ENCODE measurements at regions of chr5 and their contacts with region 1.

Region 1: DNA sequence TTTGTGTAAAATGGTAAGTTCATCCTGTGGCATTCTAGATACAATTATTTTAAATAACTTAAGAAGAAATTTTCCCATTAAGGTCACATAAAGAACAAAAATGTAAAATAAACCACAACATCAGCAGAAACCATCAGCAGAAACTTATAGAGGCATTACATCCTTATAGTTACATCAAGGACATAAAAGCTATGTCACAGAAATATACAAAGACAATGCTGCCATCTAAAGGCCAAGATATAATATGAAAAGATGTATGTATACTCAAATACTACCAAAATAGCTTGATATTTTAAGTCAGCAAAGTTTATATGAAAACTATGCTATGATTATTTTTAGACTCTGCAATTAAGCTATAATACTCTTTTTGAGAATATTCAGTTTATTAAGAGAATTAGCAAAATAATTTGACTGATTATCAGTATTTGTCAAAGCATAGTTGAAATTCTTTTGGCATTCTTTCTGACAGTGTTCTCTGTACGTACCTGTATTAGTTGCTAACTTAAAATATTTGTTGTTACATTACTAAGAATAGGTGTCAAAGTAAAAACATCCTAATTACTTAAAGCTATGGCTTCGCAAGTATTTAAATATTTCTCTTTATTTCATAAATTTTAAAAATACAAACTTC is 36.2 kb downstream of the FBXL17 start:
- DNase-seq: peak; percentile 70
- H3K4me3 ChIP-seq: no peak overlapping the region
- H3K27ac ChIP-seq: no peak overlapping the region
- H3K4me1 ChIP-seq: no peaks in the 10 kb centered on the region
- H3K27me3 ChIP-seq: no peaks in the 10 kb centered on the region
- CTCF ChIP-seq: peak; percentile 2 to 10
- POLR2A ChIP-seq: no peak

Region 2: DNA sequence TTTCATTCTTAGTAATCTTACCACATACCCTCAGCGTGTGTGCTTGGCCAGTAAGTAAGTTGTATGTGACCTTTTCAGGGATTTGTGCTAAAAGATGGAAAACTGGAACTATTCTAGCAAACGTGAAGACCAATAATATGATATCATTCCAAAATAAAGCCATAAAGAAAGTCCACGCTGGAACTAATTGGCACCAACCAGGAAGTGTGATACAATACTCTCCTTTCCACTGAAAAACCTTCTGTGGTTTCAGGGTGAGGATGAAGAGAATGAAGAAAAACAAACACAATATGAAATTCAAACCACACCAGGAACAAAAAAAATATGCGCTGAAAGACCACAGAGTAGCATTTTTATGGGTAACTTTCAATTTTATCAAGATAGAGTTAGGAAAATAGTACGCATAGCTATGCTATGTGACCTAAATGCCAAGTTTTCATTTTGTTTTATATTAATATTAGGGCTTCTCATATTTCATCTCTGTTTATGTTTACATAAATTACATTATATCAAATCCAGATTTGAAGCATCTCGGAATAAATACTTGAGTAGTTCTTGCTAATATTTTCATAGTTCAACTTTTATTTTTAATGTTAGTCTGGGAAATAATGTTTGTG is 780.7 kb before region 1 on chr5:
- CTCF ChIA-PET with region 1: no interaction called
- POLR2A ChIA-PET with region 1: no interaction called
- dilution Hi-C with region 1: no loop called
- intact Hi-C with region 1: no loop called
- DNase-seq: peak; percentile 71
- H3K4me3 ChIP-seq: peak overlapping the region in 1 of 3 experiments; percentile 39
- H3K27ac ChIP-seq: peak overlapping the region; percentile 68
- H3K4me1 ChIP-seq: peaks cover 22% of the 10 kb centered on the region
- H3K27me3 ChIP-seq: no peaks in the 10 kb centered on the region
- CTCF ChIP-seq: no peak
- POLR2A ChIP-seq: no peak

Region 3: DNA sequence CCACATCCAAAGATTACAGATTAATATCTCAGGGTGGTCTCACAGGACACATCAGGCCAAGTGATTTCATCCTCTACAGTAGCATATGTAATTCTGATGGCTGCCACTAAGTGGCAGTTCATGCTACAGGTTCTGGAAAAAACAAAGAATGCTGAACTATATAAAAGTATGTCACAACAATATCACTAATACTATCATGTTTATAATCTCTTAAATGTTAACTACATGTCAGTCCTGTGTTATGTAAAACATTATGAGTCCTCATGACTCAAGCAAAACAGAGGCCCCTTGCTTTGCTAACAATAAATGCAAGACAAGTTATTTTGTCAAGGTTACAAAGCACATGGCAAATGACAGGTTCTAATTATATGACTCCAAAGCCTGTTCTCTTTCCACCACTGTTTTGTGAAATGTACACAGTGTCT is 196.9 kb before region 1 on chr5:
- CTCF ChIA-PET with region 1: interaction called, 19 read pairs
- POLR2A ChIA-PET with region 1: no interaction called
- dilution Hi-C with region 1: no loop called
- intact Hi-C with region 1: loop called (anchors 1 kb)
- DNase-seq: peak; percentile 49
- H3K4me3 ChIP-seq: no peak overlapping the region
- H3K27ac ChIP-seq: no peak overlapping the region
- H3K4me1 ChIP-seq: no peaks in the 10 kb centered on the region
- H3K27me3 ChIP-seq: no peaks in the 10 kb centered on the region
- CTCF ChIP-seq: peak; percentile 28 to 35
- POLR2A ChIP-seq: no peak

Region 4: DNA sequence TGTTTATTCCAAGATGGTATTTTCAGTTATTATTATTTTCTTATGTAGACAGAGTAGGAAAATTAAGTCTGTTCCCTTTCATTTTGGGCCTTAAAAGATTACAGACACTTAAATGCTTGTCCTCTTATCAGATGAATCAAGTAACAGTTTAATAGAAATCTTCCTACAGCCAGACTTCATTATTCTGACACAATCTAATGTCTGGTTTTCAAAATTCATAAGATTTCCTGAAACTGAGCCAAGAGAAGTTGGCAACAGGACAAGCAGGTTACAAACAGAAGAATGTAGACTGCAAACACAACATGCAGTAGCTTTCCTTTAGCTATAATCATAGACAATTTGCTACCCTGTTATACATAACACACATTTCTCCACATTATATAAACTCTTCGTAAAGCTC is 94.3 kb before region 1 on chr5:
- CTCF ChIA-PET with region 1: interaction called, 10 read pairs
- POLR2A ChIA-PET with region 1: no interaction called
- dilution Hi-C with region 1: no loop called
- intact Hi-C with region 1: no loop called
- DNase-seq: peak; percentile 86
- H3K4me3 ChIP-seq: no peak overlapping the region
- H3K27ac ChIP-seq: no peak overlapping the region
- H3K4me1 ChIP-seq: no peaks in the 10 kb centered on the region
- H3K27me3 ChIP-seq: no peaks in the 10 kb centered on the region
- CTCF ChIP-seq: no peak
- POLR2A ChIP-seq: no peak

Region 5: GRCh38 chr5:108295578-108296368 is 49.9 kb before region 1 on chr5:
- CTCF ChIA-PET with region 1: interaction called, 7 read pairs
- POLR2A ChIA-PET with region 1: no interaction called
- dilution Hi-C with region 1: no loop called
- intact Hi-C with region 1: loop called (anchors 2 kb)
- DNase-seq: peak; percentile 80
- H3K4me3 ChIP-seq: no peak overlapping the region
- H3K27ac ChIP-seq: peak overlapping the region; percentile 75
- H3K4me1 ChIP-seq: peaks cover 12% of the 10 kb centered on the region
- H3K27me3 ChIP-seq: no peaks in the 10 kb centered on the region
- CTCF ChIP-seq: no peak
- POLR2A ChIP-seq: no peak

Region 6: DNA sequence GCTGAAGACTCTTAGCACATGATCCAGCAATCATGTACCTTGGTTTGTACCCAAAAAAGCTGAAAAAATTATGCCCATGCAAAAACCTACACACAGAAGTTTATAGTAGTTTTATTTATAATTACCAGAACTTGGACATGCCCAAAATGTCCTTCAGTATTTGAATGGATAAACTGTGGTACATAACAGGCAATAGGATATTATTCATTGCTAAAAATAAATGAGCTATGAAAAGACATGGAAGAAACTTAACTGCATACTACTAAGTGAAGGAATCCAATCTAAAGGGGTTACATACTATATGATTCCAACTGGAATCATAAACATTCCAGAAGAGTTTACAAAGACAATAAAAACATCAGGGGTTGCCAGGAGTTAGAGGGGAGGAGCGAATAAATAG is 10.6 kb after region 1 on chr5:
- CTCF ChIA-PET with region 1: interaction called, 14 read pairs
- POLR2A ChIA-PET with region 1: no interaction called
- dilution Hi-C with region 1: no loop called
- intact Hi-C with region 1: no loop called
- DNase-seq: no peak
- H3K4me3 ChIP-seq: no peak overlapping the region
- H3K27ac ChIP-seq: no peak overlapping the region
- H3K4me1 ChIP-seq: no peaks in the 10 kb centered on the region
- H3K27me3 ChIP-seq: no peaks in the 10 kb centered on the region
- CTCF ChIP-seq: no peak
- POLR2A ChIP-seq: no peak

Measured in endothelial cell of umbilical vein (primary cell).